Activated naive CD4-positive, alpha-beta T cell treated with anti-CD3 and anti-CD28 coated beads for 36 hours (primary cell): ENCODE measurements at regions of chr18 and their contacts with region 1.

Region 1: DNA sequence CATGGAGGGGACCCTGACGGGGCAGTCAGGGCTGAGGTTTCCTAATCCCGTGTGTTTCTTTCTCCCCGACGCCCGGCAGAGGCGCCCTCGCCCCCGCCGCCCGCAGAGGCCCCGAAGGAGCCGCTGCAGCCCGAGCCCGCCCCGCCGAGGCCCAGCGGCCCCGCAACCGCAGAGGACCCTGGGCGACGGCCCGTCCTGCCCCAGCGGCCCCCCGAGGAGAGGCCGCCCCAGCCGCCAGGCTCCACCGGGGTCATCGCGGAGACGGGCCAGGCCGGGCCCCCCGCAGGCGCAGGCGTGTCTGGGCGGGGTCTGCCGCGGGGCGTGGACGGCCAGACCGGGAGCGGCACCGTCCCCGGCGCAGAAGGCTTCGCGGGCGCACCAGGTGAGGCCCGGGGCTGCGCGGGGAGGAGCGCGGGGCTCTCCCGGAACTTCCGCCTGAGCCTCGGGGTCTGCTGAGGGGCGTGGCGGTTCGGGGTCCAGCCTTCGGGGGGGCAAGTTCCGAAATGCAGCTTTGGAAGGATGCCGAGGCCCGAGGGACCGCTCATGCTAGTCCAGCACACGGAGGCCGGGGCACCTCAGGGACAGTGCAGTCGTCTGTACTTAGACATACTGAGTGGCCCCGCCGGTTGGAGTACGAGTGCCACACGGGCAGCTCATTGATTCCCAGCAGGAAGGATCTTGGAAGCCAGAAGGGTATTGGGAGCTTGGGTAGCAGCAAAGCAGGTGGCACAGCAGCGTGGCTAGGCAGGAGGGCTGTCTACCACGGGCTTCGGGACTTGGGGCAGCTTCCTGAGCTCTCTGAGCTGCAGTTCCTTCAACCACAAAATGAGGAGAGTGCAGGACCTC is 60.1 kb downstream of the EMILIN2 start:
- DNase-seq: peak; percentile 51
- H3K4me3 Mint-ChIP-seq: peak overlapping the region; percentile 81
- H3K27ac Mint-ChIP-seq: peak overlapping the region; percentile 33
- H3K4me1 Mint-ChIP-seq: peaks cover 12% of the 10 kb centered on the region
- H3K27me3 Mint-ChIP-seq: no peaks in the 10 kb centered on the region

Region 2: GRCh38 chr18:2846636-2847364 is 60.1 kb before region 1 on chr18 and contains the start of gene EMILIN2:
- CTCF ChIA-PET with region 1: no interaction called
- intact Hi-C with region 1: loop called (anchors 1 kb)
- DNase-seq: peak; percentile 64
- H3K4me3 Mint-ChIP-seq: peak within 1 kb of the TSS; percentile 83
- H3K27ac Mint-ChIP-seq: peak within 1 kb of the TSS; percentile 61
- H3K4me1 Mint-ChIP-seq: peaks cover 18% of the 10 kb centered on the region
- H3K27me3 Mint-ChIP-seq: peaks cover 31% of the 10 kb centered on the region
- total RNA-seq, gene EMILIN2: 12.2 to 13.2 TPM

Region 3: DNA sequence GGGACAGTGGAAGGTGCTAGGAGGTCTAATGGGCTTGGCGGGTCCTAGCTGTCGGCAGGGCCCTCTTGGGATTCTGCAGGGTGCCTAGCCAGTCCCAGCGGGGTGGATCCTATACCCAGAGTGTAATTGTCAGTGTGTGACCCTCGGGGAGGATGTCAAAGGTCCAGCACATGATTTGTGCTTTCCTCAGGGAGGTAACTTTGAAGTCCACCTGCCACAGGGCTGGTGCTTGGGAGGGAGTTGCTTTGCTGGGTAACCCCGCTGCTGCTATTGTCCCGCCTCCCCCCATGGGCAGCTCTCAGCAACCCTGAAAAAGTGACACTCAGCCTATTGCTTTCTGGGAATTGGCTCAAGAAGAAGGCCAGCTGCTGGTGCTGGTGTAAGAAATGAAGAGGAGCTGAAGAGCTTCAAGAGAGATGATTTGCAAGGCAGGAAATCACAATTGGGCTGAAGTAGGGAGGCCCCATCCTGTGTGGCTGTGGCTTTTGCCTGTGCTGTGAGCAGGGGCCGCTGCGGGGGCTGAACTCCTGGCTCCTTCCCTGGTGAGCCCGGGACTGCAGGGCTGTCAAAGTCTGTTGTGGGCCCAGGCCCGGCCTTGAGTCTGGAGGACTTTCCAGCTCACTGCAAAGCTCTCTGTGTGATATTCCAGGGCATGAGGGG is 23.7 kb before region 1 on chr18:
- CTCF ChIA-PET with region 1: interaction called, 3 read pairs
- intact Hi-C with region 1: loop called (anchors 1 kb)
- DNase-seq: peak; percentile 76
- H3K4me3 Mint-ChIP-seq: peak overlapping the region; percentile 5
- H3K27ac Mint-ChIP-seq: peak overlapping the region; percentile 83
- H3K4me1 Mint-ChIP-seq: peaks cover 29% of the 10 kb centered on the region
- H3K27me3 Mint-ChIP-seq: no peaks in the 10 kb centered on the region

Region 4: GRCh38 chr18:2889761-2890192 is 17.1 kb before region 1 on chr18:
- CTCF ChIA-PET with region 1: interaction called, 3 read pairs
- intact Hi-C with region 1: loop called (anchors 1 kb)
- DNase-seq: no peak
- H3K4me3 Mint-ChIP-seq: no peak overlapping the region
- H3K27ac Mint-ChIP-seq: no peak overlapping the region
- H3K4me1 Mint-ChIP-seq: peaks cover 31% of the 10 kb centered on the region
- H3K27me3 Mint-ChIP-seq: no peaks in the 10 kb centered on the region